ENCODE measurements at regions of chr12 and their contacts with region 1.

Region 1: DNA sequence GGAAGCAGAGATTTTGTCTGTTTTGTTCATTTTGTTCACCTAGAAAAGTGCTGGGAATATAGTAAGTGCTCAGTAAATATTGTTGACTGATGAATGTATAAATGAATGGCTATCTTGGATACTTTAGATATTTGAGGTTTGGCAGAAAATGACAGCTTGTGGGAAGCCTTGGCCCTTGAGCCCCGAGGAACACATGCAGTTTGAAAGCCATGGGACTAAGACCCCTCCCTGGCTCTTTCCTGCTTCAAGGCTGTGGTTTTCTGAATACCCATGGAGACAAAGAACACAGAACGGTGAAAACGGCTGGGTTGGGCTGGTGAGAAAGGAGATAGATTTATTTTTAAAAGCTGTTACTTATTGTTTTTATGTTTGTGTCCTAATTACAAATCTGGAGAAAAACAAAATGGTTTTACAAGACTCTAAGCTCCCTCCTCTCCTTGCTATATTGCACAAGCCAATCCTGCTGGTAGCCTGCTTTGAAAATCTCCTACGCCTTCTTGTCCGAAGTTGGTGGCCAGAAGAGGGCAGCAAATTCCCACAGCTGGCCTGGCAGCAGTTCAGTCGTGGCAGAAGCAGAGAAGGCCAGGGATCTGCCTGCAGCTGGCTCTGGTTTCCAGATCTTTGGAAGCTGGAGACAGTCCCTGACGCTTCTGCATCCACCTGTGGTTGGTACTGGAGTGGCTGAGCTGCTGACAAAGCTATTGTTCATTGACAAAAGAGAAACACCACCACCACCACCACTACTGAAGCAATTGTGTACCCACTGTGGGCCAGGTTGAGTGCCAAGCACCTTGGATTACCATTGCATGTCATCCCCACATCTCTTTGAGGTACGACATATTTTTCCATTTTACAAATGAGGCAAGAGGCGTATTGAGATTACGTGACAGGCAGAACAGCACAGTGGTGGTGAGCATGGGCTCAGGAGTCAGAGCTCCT is 5.2 kb upstream of the KRT85 start:
- DNase-seq: peak; percentile 61
- H3K4me3 ChIP-seq: no peak overlapping the region
- CTCF ChIP-seq: peak; percentile 92

Region 2: DNA sequence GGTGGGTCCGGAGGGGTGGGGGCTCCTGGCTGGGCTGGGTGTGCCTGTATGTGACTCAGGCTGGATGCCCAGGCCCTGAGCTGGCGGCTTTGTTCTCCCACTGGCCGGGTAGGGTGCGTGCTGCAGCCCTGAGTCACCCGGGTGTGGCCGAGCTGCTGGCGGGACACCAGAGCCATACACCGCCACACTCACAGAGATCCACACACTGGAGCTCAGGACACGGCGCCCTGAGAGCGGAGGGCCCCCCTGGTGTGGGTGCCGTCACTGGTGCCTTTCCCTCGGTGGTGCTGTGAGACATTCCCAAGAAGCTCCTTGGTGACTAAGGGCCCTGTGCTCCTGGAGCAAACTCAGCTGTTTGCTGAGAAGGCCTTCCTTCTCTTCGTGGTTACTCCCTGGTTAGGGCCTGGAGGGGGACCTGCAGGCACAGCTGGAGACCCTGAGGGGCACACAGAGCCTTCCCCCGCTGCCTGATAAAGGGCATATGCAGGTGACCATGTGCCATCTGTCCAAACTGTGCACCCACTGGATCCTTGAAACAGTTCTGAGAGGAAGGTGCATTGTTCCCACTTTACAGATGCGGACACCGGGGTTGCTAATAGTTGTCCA is 225.0 kb before region 1 on chr12:
- CTCF ChIA-PET with region 1: interaction called, 26 read pairs
- POLR2A ChIA-PET with region 1: no interaction called
- DNase-seq: peak; percentile 92
- H3K4me3 ChIP-seq: no peak overlapping the region
- CTCF ChIP-seq: no peak

Region 3: GRCh38 chr12:52268212-52268611 is 104.3 kb before region 1 on chr12:
- CTCF ChIA-PET with region 1: no interaction called
- POLR2A ChIA-PET with region 1: no interaction called
- DNase-seq: no peak
- H3K4me3 ChIP-seq: no peak overlapping the region
- CTCF ChIP-seq: no peak

Region 4: GRCh38 chr12:52327052-52327829 is 45.2 kb before region 1 on chr12:
- CTCF ChIA-PET with region 1: interaction called, 15 read pairs
- POLR2A ChIA-PET with region 1: no interaction called
- DNase-seq: peak; percentile 55
- H3K4me3 ChIP-seq: no peak overlapping the region
- CTCF ChIP-seq: peak; percentile 98

Region 5: DNA sequence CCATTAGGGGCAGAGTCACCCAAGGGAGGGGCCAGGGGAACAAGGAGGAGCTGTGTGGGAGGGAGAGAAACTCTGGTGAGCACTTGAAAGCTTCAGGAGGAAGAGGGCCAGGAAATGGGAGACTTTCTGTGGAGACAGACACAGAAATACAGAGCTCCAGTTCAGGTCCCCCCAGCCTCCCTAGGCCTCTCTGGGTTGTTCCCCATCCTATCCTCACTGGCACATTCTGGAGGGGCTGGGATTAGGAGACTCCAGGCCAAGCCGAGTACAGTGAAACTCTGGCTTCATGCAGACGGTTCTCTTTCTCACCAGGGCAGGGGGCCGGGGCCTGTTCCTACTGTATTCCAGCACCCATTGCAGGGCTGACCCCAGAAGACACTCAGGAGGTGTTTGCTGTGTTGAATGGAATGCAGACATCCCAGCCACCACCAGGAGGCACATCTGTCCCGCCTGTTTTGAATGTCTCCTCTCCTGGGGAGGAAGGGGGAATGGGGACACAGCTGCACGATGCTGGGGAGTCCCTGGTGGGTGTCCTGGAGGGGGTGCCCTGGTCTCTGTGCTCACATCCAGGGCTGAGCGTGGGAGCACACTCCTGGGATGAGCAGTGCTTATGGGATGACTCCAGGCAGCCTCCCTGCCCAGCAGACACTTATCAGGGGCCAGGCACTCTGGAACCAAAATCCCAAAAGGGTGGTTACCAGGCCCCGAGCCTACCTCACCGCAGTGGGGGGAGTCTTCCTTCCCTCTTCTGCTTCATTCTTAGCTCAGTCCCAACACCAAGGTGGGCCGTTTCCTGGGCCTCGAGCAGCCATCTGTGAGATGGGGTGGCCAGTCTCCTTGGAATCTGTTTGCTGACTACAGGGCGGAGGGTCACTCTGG is 18.5 kb after region 1 on chr12:
- CTCF ChIA-PET with region 1: interaction called, 137 read pairs
- POLR2A ChIA-PET with region 1: no interaction called
- DNase-seq: no peak
- H3K4me3 ChIP-seq: no peak overlapping the region
- CTCF ChIP-seq: peak; percentile 73

Region 6: GRCh38 chr12:52522346-52523011 is 150.0 kb after region 1 on chr12:
- CTCF ChIA-PET with region 1: interaction called, 14 read pairs
- POLR2A ChIA-PET with region 1: no interaction called
- DNase-seq: no peak
- H3K4me3 ChIP-seq: no peak overlapping the region
- CTCF ChIP-seq: no peak

Region 7: GRCh38 chr12:52582971-52583456 is 210.5 kb after region 1 on chr12:
- CTCF ChIA-PET with region 1: interaction called, 83 read pairs
- POLR2A ChIA-PET with region 1: no interaction called
- DNase-seq: peak; percentile 4
- H3K4me3 ChIP-seq: no peak overlapping the region
- CTCF ChIP-seq: peak; percentile 82

Region 8: DNA sequence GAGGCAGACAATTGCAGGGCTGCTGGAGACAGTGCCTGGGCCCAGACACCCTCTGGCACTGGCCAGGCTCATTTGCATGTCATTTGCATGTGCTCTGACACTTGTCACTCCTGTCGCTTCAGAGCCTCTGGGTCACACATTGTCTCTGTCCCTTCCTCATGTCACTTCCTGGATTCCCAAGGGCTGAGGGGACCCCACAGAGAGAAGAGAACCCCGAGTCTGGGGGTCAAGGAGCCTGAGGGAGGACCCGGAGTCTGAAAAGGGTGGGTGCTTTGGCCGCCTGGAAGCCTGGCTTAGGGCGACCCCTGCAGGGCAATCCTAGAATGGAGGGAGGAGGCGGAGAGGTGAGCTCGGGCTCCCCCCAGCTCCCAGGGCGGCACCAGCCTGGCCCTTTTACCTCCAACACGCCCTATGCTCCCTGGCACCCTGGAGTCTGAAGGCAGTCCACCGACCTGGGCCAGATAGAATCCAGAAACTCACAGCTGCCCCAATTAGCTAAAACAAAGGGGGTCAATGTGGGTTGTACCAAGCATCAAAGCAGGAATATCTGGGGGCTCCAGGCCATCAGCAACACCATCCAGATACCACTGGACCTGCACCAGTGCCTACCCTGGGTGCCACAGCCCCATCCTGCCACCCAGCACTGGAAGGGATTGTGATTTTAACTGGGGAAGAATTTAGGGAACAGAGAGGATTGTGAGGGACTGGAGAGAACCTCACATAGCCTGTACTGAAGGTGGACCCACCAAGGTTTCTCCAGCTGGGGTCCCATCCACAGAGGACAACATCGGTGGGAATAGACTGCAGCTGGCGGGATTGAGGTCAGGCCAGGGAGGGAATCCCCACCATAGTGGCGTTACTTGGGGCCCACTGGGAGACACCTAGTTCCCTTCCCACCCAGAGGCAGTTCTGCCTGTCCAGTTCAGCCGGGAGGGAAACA is 498.1 kb after region 1 on chr12:
- CTCF ChIA-PET with region 1: interaction called, 488 read pairs
- POLR2A ChIA-PET with region 1: no interaction called
- DNase-seq: no peak
- H3K4me3 ChIP-seq: no peak overlapping the region
- CTCF ChIP-seq: peak; percentile 86